AG04449 (cell line): ENCODE measurements at regions of chr5 and their contacts with region 1.

Region 1: DNA sequence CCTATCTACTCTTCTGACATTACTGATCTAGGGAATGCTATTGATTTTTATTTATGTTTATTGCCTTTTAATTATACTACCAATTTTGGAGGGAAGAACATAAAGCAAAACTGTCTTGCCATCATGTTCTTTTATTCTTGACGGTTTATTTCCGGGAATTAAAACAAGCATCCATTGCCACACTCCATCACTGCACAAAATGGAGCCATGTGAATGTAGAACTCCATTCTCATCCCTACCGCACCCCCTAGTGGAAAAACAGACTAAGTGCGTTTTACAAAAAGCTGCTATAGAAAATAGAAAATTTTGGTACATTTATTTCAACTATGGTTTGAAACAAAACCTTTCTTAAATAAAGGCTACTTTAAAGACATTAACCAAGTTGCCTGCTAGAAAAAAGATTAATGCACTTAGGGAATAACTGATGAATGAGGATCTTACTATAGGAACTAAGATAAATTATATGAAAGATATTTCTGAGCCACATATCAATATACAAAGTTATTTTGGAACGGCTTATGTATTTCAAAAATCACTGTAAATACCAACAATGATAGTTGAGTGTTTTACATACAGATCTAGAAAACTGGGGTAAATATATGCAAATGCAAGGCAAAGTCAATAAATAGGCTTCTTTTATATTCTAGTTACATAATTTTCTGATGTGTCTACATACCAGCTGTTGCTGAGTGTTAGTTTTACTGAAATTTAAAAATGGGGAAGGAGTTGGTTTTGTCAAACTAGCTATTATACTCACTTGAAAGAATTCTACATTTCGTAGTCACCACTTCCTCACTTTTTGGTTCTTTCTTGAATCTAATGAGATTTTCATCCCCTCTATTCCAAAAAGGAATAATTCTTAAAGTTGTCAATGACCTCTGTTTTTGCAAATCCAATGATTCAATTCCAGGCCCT is 26.5 kb downstream of the OXCT1 start:
- DNase-seq: peak; percentile 10
- H3K4me3 ChIP-seq: no peak overlapping the region
- CTCF ChIP-seq: peak; percentile 43

Region 2: GRCh38 chr5:41695920-41696582 is 147.7 kb before region 1 on chr5:
- CTCF ChIA-PET with region 1: interaction called, 45 read pairs
- POLR2A ChIA-PET with region 1: no interaction called
- DNase-seq: no peak
- H3K4me3 ChIP-seq: no peak overlapping the region
- CTCF ChIP-seq: peak; percentile 11

Region 3: GRCh38 chr5:41716382-41716781 is 127.3 kb before region 1 on chr5:
- CTCF ChIA-PET with region 1: interaction called, 171 read pairs
- POLR2A ChIA-PET with region 1: no interaction called
- DNase-seq: no peak
- H3K4me3 ChIP-seq: no peak overlapping the region
- CTCF ChIP-seq: no peak

Region 4: DNA sequence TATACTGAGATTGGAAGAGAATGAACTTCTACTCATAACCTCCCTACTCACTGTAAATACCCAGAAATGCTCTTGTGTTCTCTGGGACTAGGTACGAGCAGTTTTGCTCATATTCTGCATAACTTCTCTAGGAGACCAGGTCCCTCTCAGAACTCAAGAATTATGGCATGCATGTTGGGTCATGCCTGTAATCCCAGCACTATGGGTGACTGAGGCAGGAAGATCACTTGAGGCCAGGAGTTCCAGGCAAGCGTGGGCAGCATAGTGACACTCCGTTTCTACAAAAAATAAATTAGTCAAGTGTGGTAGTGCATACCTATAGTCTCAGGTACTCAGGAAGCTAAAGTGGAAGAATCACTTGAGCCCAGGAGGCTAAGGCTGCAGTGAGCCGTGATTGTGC is 115.4 kb before region 1 on chr5:
- CTCF ChIA-PET with region 1: interaction called, 11 read pairs
- POLR2A ChIA-PET with region 1: no interaction called
- DNase-seq: no peak
- H3K4me3 ChIP-seq: no peak overlapping the region
- CTCF ChIP-seq: no peak

Region 5: GRCh38 chr5:41856644-41857491 is 13.2 kb after region 1 on chr5:
- CTCF ChIA-PET with region 1: interaction called, 14 read pairs
- POLR2A ChIA-PET with region 1: no interaction called
- DNase-seq: no peak
- H3K4me3 ChIP-seq: no peak overlapping the region
- CTCF ChIP-seq: peak; percentile 57